ENCODE measurements at regions of chr4 and their contacts with region 1.

Region 1: GRCh38 chr4:1200425-1201035 is 28.1 kb upstream of the SPON2 start:
- DNase-seq: peak; percentile 71
- ATAC-seq: peak; percentile 3
- H3K4me3 Mint-ChIP-seq: peak overlapping the region; percentile 63
- H3K27ac Mint-ChIP-seq: peak overlapping the region; percentile 100
- H3K4me1 Mint-ChIP-seq: peaks cover 51% of the 10 kb centered on the region
- H3K27me3 Mint-ChIP-seq: no peaks in the 10 kb centered on the region

Region 2: GRCh38 chr4:1130316-1131186 is 70.0 kb before region 1 on chr4:
- CTCF ChIA-PET with region 1: interaction called, 15 read pairs
- DNase-seq: peak; percentile 84
- ATAC-seq: peak; percentile 98
- H3K4me3 Mint-ChIP-seq: no peak overlapping the region
- H3K27ac Mint-ChIP-seq: no peak overlapping the region
- H3K4me1 Mint-ChIP-seq: peaks cover 4% of the 10 kb centered on the region
- H3K27me3 Mint-ChIP-seq: peaks cover 15% of the 10 kb centered on the region

Region 3: GRCh38 chr4:1183985-1184773 is 16.4 kb before region 1 on chr4:
- CTCF ChIA-PET with region 1: interaction called, 23 read pairs
- DNase-seq: no peak
- ATAC-seq: peak; percentile 46
- H3K4me3 Mint-ChIP-seq: peak overlapping the region; percentile 57
- H3K27ac Mint-ChIP-seq: peak overlapping the region; percentile 80
- H3K4me1 Mint-ChIP-seq: peaks cover 51% of the 10 kb centered on the region
- H3K27me3 Mint-ChIP-seq: no peaks in the 10 kb centered on the region

Region 4: DNA sequence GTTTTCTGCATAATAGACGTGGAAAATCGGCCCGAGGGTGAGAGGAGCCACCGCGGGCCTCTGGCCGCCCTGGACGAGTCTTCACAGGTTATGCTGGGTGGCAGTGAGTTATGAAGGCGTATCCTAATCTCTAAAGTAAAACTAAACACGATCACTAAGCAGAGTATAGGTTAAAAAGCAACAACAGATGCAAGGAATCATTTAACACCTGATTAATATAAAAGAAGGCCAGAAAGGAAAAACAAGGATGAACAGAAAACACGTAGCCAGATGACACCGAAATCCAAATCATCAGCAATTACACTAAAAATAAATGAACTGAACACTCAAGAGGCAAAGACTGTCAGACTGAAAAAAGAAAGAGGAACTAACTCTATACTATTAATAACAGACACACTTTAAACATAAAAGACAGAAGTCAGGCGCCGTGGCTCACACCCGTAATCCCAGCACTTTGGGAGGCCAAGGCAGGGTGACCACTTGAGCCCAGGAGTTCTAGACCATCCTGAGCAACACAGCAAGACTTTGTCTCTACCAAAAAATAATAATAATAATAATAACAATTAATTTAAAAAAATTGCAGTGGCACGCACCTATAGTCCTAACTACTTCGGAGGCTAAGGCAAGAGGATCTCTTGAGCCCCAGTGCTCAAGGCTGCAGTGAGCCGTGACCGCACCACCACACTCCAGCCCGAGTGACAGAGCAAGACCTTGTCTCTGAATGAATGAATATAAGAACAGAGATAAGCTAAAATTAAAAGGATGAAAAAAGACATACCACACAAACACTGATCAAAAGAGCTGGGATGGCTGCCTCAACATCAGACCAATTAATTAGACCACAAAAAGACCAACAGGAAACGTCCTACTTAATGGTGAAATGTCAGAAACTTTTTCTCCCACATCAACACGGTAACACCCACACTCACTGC is 18.4 kb after region 1 on chr4:
- CTCF ChIA-PET with region 1: interaction called, 14 read pairs
- DNase-seq: no peak
- ATAC-seq: no peak
- H3K4me3 Mint-ChIP-seq: no peak overlapping the region
- H3K27ac Mint-ChIP-seq: peak overlapping the region; percentile 67
- H3K4me1 Mint-ChIP-seq: peaks cover 43% of the 10 kb centered on the region
- H3K27me3 Mint-ChIP-seq: no peaks in the 10 kb centered on the region

Region 5: DNA sequence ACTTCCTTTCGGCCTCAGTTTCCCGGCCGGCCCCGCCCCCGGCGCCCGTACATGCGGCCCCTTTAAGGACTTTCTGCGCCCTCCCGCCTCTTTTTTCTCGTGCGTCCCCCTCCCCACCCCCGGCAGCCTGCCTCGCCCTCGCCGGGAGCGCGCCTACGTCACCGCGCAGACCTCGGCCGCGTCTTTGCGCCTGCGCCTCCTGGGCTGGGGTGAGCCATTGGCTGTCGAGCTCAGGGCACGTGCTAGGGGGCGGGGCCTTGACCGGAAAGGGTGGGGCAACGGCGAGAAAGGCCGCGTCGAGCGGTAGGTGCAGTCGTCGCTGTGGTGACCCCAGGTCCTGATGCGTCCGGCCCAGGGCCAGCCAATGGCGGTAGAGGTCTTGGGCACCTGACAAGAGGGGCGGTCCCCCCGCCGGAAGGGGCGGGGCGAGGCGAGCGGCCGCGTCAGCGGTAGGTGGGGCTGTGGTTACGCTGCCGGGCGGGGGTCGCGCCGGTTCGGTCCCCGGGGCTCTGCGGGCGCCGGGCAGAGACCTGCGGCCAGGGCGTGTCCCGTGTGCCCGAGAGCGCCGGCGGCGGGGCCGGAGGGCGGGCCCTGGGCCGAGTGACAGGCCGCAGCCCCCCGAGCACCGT is 146.4 kb after region 1 on chr4 and contains the start of gene UVSSA:
- CTCF ChIA-PET with region 1: interaction called, 23 read pairs
- DNase-seq: peak; percentile 100
- ATAC-seq: peak; percentile 93
- H3K4me3 Mint-ChIP-seq: peak within 1 kb of the TSS; percentile 85
- H3K27ac Mint-ChIP-seq: peak within 1 kb of the TSS; percentile 96
- H3K4me1 Mint-ChIP-seq: peaks cover 36% of the 10 kb centered on the region
- H3K27me3 Mint-ChIP-seq: no peaks in the 10 kb centered on the region
- total RNA-seq, gene UVSSA: 18.2 to 25.2 TPM